ENCODE measurements at regions of chr14 and their contacts with region 1.

Region 1: DNA sequence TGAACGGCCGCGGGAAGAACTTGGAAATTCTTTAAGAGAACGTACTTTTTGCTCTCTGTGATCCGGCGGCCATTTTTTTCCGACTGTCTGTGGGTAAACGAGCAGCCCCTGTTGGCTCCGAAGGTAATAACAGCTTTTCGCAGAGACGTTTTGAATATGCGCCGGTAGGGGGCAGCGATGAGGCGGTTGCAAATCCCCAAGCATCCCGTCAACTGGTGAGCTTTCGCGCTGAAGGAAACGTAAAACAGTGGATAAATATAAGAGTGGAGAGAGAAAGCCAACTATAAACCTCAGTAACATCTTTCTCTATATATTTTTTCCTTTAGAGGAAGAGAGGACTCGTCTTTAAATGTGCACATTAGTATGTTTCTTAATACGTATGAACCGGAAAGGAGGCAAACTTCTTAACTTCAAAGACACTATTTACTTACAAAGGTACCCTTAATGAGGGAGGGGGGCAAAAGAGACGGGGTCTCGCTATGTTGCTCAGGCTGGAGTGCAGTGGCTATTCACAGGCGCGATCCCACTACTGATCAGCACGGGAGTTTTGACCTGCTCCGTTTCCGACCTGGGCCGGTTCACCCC is 9.6 kb upstream of the NEMF start:
- DNase-seq: no peak
- ATAC-seq: peak; percentile 5
- H3K4me3 ChIP-seq: peak overlapping the region; percentile 79
- H3K27ac ChIP-seq: peak overlapping the region; percentile 99
- H3K4me1 ChIP-seq: peaks cover 8% of the 10 kb centered on the region
- H3K27me3 ChIP-seq: no peaks in the 10 kb centered on the region
- CTCF ChIP-seq: peak; percentile 100
- EP300 ChIP-seq: peak in 1 of 2 experiments; percentile 26; a peak in 1 of 4 replicates
- POLR2A ChIP-seq: no peak
- RAD21 ChIP-seq: peak; percentile 64

Region 2: GRCh38 chr14:49620182-49621113 is 241.7 kb before region 1 on chr14 and contains the starts of genes MGAT2 and RPL36AL:
- CTCF ChIA-PET with region 1: interaction called, 6 read pairs
- POLR2A ChIA-PET with region 1: interaction called, 12 read pairs
- RAD21 ChIA-PET with region 1: interaction called, 18 read pairs
- SMC1A ChIA-PET with region 1: interaction called, 3 read pairs
- in situ Hi-C with region 1: no loop called
- intact Hi-C with region 1: no loop called
- DNase-seq: peak; percentile 97
- ATAC-seq: peak; percentile 92
- H3K4me3 ChIP-seq: peak within 1 kb of the TSS; percentile 92
- H3K27ac ChIP-seq: peak within 1 kb of the TSS; percentile 98
- H3K4me1 ChIP-seq: no peaks in the 10 kb centered on the region; the same call in 1 of the 2 replicates
- H3K27me3 ChIP-seq: no peaks in the 10 kb centered on the region
- CTCF ChIP-seq: peak; percentile 13 to 45 (median 21); a peak in 3 of 6 replicates
- EP300 ChIP-seq: no peak; a peak in 1 of 4 replicates
- POLR2A ChIP-seq: peak; percentile 99
- RAD21 ChIP-seq: no peak
- polyA plus RNA-seq, gene MGAT2: 0.03 TPM in 1 of 2 experiments, not detected in the other
- polyA plus RNA-seq, gene RPL36AL: 1,365 to 1,379 TPM

Region 3: DNA sequence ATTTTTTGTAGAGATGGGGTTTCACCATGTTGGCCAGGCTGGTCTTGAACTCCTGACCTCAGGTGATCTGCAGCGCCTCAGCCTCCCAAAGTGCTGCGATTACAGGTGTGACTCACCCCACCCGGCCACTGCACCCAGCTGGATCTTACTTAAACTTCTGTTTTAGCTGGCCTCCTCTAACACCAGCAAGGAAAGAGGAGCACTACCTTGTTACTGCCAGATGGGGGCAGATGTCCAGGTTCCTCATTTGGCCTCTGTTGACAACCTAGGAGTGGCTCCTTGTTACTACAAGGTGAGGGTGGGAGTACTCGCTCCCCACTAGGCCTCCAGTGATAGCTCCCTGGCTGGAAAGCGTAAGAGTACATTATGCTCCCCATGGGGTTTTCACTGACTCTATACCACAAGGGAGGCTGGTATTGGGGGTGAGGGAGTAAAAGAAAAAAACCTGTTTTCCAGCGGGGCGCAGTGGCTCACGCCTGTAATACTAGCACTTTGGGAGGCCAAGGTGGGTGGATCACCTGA is 17.6 kb after region 1 on chr14:
- CTCF ChIA-PET with region 1: interaction called, 30 read pairs
- POLR2A ChIA-PET with region 1: interaction called, 3 read pairs
- RAD21 ChIA-PET with region 1: interaction called, 3 read pairs
- SMC1A ChIA-PET with region 1: interaction called, 19 read pairs
- in situ Hi-C with region 1: no loop called
- intact Hi-C with region 1: no loop called
- DNase-seq: no peak
- ATAC-seq: peak; percentile 98
- H3K4me3 ChIP-seq: no peak overlapping the region
- H3K27ac ChIP-seq: no peak overlapping the region
- H3K4me1 ChIP-seq: no peaks in the 10 kb centered on the region
- H3K27me3 ChIP-seq: no peaks in the 10 kb centered on the region
- CTCF ChIP-seq: peak; percentile 50 to 74 (median 72)
- EP300 ChIP-seq: no peak
- POLR2A ChIP-seq: no peak
- RAD21 ChIP-seq: peak; percentile 72

Region 4: GRCh38 chr14:49971156-49972130 is 109.3 kb after region 1 on chr14:
- CTCF ChIA-PET with region 1: interaction called, 7 read pairs
- POLR2A ChIA-PET with region 1: interaction called, 23 read pairs
- RAD21 ChIA-PET with region 1: interaction called, 20 read pairs
- SMC1A ChIA-PET with region 1: interaction called, 27 read pairs
- in situ Hi-C with region 1: no loop called
- intact Hi-C with region 1: no loop called
- DNase-seq: peak; percentile 89
- ATAC-seq: peak; percentile 90
- H3K4me3 ChIP-seq: peak overlapping the region; percentile 49
- H3K27ac ChIP-seq: peak overlapping the region; percentile 100
- H3K4me1 ChIP-seq: peaks cover 39% of the 10 kb centered on the region
- H3K27me3 ChIP-seq: no peaks in the 10 kb centered on the region
- CTCF ChIP-seq: no peak
- EP300 ChIP-seq: peak; percentile 90 to 95
- POLR2A ChIP-seq: peak; percentile 24; the same call in 1 of the 2 replicates
- RAD21 ChIP-seq: no peak

Region 5: DNA sequence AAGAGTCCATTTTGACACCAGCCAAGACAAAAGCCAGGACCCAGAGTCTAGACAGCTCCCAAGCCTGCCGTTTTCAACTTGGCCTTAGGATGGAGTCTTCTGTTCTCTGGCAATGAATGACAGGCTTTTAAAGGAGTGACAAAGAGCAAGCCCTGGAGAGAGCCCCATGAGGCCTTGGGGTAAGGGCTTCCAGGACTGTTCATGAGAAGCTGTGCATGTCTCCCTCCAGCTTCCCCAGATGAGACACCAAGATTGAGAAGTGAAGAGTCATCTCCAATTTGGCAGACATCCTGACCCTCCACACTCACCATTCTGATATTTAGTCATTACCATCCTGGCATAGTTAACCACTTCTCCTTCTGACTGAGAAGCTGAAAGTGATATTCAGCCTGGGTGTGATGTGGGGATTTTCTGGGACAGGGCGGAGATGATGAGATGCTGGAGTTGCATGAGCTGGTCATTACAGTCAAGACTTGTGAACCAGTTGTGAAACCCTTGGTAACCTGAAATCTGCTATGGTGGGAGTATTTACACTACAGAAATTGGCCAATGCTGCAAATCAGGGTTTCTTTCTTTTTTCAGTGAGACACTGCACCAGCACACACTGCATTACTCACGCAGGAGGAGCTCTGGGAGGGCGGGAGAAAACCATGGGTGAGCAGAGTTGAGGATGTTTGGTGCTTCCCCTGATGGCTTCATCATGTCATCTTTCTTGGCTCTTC is 176.4 kb after region 1 on chr14:
- CTCF ChIA-PET with region 1: interaction called, 68 read pairs
- POLR2A ChIA-PET with region 1: interaction called, 7 read pairs
- RAD21 ChIA-PET with region 1: interaction called, 38 read pairs
- SMC1A ChIA-PET with region 1: interaction called, 35 read pairs
- in situ Hi-C with region 1: no loop called
- intact Hi-C with region 1: loop called (anchors 2 kb)
- DNase-seq: peak; percentile 100
- ATAC-seq: peak; percentile 87
- H3K4me3 ChIP-seq: peak overlapping the region; percentile 1; the same call in 1 of the 2 replicates
- H3K27ac ChIP-seq: peak overlapping the region; percentile 96
- H3K4me1 ChIP-seq: peaks cover 49% of the 10 kb centered on the region
- H3K27me3 ChIP-seq: no peaks in the 10 kb centered on the region
- CTCF ChIP-seq: 0 out of 6 replicates have a peak, but pooled peaks of 2 of the 3 experiments have one; percentile 10
- EP300 ChIP-seq: peak; percentile 91 to 99
- POLR2A ChIP-seq: peak; percentile 56
- RAD21 ChIP-seq: peak; percentile 35

Region 6: GRCh38 chr14:50099335-50099734 is 237.2 kb after region 1 on chr14:
- CTCF ChIA-PET with region 1: interaction called, 243 read pairs
- POLR2A ChIA-PET with region 1: interaction called, 12 read pairs
- RAD21 ChIA-PET with region 1: interaction called, 26 read pairs
- SMC1A ChIA-PET with region 1: interaction called, 68 read pairs
- in situ Hi-C with region 1: loop called (anchors 10 kb)
- intact Hi-C with region 1: no loop called
- DNase-seq: no peak
- ATAC-seq: no peak
- H3K4me3 ChIP-seq: no peak overlapping the region
- H3K27ac ChIP-seq: no peak overlapping the region
- H3K4me1 ChIP-seq: peaks cover 12% of the 10 kb centered on the region
- H3K27me3 ChIP-seq: no peaks in the 10 kb centered on the region
- CTCF ChIP-seq: no peak
- EP300 ChIP-seq: no peak
- POLR2A ChIP-seq: no peak
- RAD21 ChIP-seq: no peak

Region 7: DNA sequence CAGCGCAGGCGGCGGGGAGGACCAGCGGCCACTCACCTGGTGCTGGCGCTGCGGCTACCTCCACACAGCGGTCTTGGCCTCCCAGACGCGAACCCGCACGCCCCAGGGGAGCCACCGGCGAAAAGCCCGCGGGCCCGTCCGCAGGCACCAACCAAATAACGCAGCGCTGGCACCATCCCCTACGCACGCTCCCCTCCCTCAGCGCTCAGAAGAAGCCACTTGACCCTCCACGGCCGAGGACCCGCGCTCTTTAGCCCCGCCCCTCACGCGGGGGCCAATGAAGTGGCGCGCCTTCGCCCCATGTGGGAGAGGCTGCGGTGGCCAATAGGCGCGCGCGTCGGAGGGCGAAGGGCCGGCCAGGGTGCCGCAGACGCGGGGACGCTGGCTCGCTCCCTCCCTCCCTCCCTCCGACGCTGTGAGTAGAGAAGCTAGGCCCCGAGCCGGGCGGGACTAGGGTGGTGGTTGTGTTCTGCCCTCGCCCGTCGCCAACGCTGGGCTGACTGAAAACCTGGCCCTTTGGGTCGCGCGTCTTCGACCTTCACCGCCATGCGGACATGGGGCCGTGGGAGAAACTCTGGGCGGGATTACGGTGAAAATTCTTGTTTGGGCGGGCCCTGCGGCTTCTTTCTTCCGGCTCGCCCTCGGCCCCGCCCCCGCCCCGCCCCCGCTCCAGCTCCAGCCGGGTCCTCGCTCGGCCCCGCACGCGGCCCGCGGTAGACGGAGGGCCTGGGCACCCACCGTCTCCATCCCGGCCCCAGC is 450.0 kb after region 1 on chr14 and contains the starts of genes DMAC2L and L2HGDH:
- CTCF ChIA-PET with region 1: no interaction called
- POLR2A ChIA-PET with region 1: no interaction called
- RAD21 ChIA-PET with region 1: no interaction called
- SMC1A ChIA-PET with region 1: interaction called, 6 read pairs
- in situ Hi-C with region 1: no loop called
- intact Hi-C with region 1: loop called (anchors 5 kb)
- DNase-seq: peak; percentile 74
- ATAC-seq: peak; percentile 97
- H3K4me3 ChIP-seq: peak within 1 kb of the TSS; percentile 97
- H3K27ac ChIP-seq: peak within 1 kb of the TSS; percentile 85
- H3K4me1 ChIP-seq: peaks cover 4% of the 10 kb centered on the region; the same call in 1 of the 2 replicates
- H3K27me3 ChIP-seq: no peaks in the 10 kb centered on the region
- CTCF ChIP-seq: no peak; a peak in 1 of 6 replicates
- EP300 ChIP-seq: no peak
- POLR2A ChIP-seq: peak; percentile 97
- RAD21 ChIP-seq: no peak
- polyA plus RNA-seq, gene DMAC2L: 63.7 to 76.3 TPM
- polyA plus RNA-seq, gene L2HGDH: 2.6 to 3.0 TPM

Measured in GM12878 (cell line).